ENCODE measurements at regions of chr3 and their contacts with region 1.

Region 1: GRCh38 chr3:15557511-15557946 is 36.0 kb upstream of the COLQ start:
- DNase-seq: peak; percentile 71
- H3K4me3 Mint-ChIP-seq: no peak overlapping the region
- H3K27ac Mint-ChIP-seq: no peak overlapping the region
- H3K4me1 Mint-ChIP-seq: peaks cover 22% of the 10 kb centered on the region
- H3K27me3 Mint-ChIP-seq: no peaks in the 10 kb centered on the region

Region 2: DNA sequence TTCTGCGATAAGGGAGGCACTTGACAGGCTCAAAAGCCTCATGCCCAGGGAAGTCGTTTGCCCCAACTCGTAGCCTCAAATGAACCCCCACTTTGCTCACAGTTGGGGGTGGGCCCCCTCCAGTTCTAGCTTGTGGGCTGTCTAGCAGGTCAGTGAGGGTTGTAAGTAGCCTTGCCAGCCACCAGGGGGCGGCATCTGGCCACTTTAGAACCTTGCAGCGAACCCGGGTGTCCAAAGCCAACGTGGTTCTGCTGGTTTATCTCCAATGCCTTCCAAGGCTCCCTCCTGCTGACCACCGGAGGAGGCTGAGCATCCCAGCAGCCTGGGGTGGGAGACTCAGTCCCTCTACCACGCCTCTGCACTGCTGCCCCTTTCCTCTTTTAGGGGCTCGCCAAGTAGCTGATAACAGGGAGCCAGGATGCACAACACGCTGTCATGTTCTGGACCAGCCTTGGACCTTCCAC is 449.4 kb before region 1 on chr3:
- intact Hi-C with region 1: loop called (anchors 10 kb)
- DNase-seq: peak; percentile 61
- H3K4me3 Mint-ChIP-seq: no peak overlapping the region
- H3K27ac Mint-ChIP-seq: no peak overlapping the region
- H3K4me1 Mint-ChIP-seq: no peaks in the 10 kb centered on the region
- H3K27me3 Mint-ChIP-seq: peaks cover 20% of the 10 kb centered on the region

Region 3: GRCh38 chr3:15427182-15427880 is 130.2 kb before region 1 on chr3 and contains the starts of genes EAF1 and METTL6:
- intact Hi-C with region 1: loop called (anchors 1 kb)
- DNase-seq: peak; percentile 79
- H3K4me3 Mint-ChIP-seq: peak within 1 kb of the TSS; percentile 95
- H3K27ac Mint-ChIP-seq: peak within 1 kb of the TSS; percentile 89
- H3K4me1 Mint-ChIP-seq: peaks cover 41% of the 10 kb centered on the region
- H3K27me3 Mint-ChIP-seq: no peaks in the 10 kb centered on the region
- total RNA-seq, gene EAF1: 23.9 and 25.9 TPM in 2 replicates
- total RNA-seq, gene METTL6: 16.1 and 16.5 TPM in 2 replicates

Region 4: DNA sequence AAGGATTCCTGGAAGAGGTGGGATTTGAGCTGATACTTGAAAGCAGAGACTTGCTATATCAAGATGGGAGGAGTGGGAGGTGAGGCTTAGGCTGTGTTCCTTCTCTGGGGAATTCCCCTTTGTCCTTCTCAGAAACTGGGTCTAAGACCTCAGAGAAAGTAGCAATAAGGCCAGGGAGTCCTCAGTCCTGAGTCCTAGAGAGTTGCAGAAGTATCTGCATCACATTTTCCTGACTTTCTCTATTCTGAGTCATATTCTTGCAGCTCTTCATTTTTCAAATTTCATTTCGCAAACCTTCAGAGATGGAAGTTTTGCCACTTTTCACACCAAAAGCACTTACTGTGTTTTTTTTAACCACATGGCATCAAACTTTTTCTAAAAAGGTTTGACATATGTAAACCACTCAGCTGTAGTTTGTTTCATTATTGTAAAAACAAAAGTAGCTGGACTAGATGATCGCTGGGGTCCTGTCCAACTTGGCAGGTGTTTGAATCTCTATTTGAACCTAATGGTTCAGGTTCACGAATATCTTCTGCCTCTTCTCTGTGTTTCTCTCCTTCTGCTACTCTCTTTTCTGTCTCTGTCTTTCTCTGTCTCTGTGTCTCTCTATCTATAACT is 57.3 kb before region 1 on chr3:
- intact Hi-C with region 1: loop called (anchors 2 kb)
- DNase-seq: no peak
- H3K4me3 Mint-ChIP-seq: no peak overlapping the region
- H3K27ac Mint-ChIP-seq: peak overlapping the region; percentile 43
- H3K4me1 Mint-ChIP-seq: peaks cover 25% of the 10 kb centered on the region
- H3K27me3 Mint-ChIP-seq: no peaks in the 10 kb centered on the region

Region 5: GRCh38 chr3:15535732-15536131 is 21.8 kb before region 1 on chr3:
- intact Hi-C with region 1: loop called (anchors 1 kb)
- DNase-seq: peak; percentile 47
- H3K4me3 Mint-ChIP-seq: peak overlapping the region; percentile 42
- H3K27ac Mint-ChIP-seq: peak overlapping the region; percentile 82
- H3K4me1 Mint-ChIP-seq: peaks cover 51% of the 10 kb centered on the region
- H3K27me3 Mint-ChIP-seq: no peaks in the 10 kb centered on the region

Region 6: DNA sequence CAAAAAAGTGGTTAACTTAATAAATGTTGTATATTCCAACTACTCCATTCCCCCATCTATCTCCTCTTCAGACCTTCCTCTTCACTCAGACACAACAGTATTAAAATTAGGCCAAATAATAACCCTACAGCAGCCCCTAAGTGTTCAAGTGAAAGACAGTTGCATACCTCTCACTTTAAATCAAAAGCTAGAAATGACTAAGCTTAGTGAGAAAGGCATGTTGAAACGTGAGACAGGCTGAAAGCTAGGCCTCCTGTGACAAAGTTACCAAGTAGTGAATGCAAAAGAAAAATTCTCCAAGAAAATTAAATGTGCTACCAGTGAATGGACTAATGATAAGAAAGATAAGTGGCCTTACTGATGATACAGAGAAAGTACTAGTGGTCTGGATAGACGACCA is 168.5 kb after region 1 on chr3:
- intact Hi-C with region 1: no loop called
- DNase-seq: no peak
- H3K4me3 Mint-ChIP-seq: no peak overlapping the region
- H3K27ac Mint-ChIP-seq: peak overlapping the region; percentile 15
- H3K4me1 Mint-ChIP-seq: peaks cover 50% of the 10 kb centered on the region
- H3K27me3 Mint-ChIP-seq: no peaks in the 10 kb centered on the region

Region 7: GRCh38 chr3:16130066-16130465 is 572.5 kb after region 1 on chr3:
- intact Hi-C with region 1: no loop called
- DNase-seq: no peak
- H3K4me3 Mint-ChIP-seq: no peak overlapping the region
- H3K27ac Mint-ChIP-seq: no peak overlapping the region
- H3K4me1 Mint-ChIP-seq: no peaks in the 10 kb centered on the region
- H3K27me3 Mint-ChIP-seq: peaks cover 2% of the 10 kb centered on the region